Adrenal gland (tissue), 19 donors: ENCODE measurements at regions of chr13 and their contacts with region 1.

Region 1: DNA sequence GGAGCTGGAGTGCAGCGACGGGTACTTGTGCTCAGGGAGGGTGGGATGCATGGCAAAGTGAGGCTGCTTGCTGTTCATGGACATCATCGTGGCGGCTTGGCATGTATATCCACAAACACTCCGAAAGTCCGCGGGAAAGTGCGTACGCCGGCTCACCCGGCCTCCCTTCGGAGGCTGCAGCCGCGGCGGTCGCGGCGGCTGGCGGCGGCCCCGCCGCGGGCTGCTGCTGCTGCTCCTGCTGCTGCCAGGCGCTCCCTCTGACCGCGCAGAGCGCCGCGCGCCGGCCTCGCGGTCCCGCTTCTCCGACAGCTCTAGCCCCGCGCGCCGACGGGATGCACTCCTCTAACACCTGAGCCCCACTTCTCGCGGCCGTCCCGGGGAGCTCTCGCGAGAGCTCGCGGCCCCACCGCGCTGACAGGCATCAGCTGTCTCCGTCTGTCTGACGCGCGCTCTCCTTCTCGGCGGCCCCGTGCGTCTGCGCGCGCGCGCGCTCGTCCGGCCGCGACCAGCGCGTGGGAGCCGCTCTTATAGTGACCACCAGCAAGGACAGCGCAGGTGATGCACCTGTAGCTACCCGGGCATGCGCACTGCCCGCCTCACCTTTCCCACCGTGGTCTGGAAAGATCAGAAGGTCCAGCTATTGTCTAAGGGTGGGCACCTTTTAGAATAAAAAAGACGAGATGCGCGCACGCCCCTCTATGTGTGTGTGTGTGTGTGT is at the start of gene POU4F1:
- DNase-seq: no peak
- H3K4me3 ChIP-seq: peak within 1 kb of the TSS in 1 of 4 donors; percentile 41
- H3K27ac ChIP-seq: no peak within 1 kb of the TSS
- H3K4me1 ChIP-seq: peaks cover 8 to 11% of the 10 kb centered on the region in 2 donors
- H3K27me3 ChIP-seq: peaks cover 92% of the 10 kb centered on the region
- CTCF ChIP-seq: no peak
- POLR2A ChIP-seq: no peak
- total RNA-seq, gene POU4F1: not detected

Region 2: DNA sequence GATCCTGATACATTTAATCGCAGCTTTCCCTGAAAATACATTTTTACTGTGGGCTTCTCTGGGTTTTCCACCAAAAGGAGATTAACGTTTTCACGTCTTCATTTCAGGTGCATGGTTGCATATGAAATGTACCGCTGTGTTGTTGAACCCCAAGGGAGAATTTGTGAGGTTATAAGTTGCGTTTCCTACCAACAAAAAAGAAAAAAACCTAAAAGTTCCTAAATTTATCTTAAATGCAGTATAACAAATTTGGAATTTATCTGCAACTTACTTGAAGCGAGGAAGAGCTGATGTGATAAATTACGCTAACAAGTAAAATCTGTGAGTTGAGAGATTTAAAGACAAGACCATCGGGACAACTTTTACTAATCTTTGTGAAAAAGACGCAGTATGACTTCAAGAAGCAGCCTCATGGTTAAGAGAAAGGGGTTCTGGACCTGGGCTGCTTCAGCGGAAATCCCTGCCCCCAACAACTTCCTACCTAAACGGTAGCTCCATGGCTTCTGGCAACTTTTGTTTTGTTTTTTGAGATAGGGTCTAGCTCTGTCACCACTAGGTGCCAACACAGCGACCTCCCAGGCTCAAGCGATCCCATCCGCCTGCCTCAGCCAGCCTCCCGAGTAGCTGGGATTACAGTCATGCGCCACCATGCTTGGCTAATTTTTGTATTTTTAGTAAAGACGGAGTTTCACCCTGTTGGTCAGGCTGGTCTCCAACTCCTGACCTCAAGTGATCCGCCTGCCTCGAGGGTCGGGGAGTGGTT is 56.5 kb after region 1 on chr13:
- intact Hi-C with region 1: loop called in 1 of 2 experiments (anchors 10 kb)
- DNase-seq: peak in 6 of 7 donors; percentile 11 to 24 (median 19)
- H3K4me3 ChIP-seq: peak overlapping the region in 3 of 4 donors; percentile 35 to 86 (median 53)
- H3K27ac ChIP-seq: peak overlapping the region in 1 of 5 donors; percentile 3
- H3K4me1 ChIP-seq: peaks cover 5 to 11% of the 10 kb centered on the region in 2 donors
- H3K27me3 ChIP-seq: no peaks in the 10 kb centered on the region
- CTCF ChIP-seq: no peak
- POLR2A ChIP-seq: no peak